Dorsolateral prefrontal cortex (tissue), 120 donors: ENCODE measurements at regions of chr5 and their contacts with region 1.

Region 1: GRCh38 chr5:32027717-32028321 is 146.3 kb downstream of the GOLPH3 start:
- DNase-seq: peak in 2 of 10 donors; percentile 43 to 57
- H3K4me3 ChIP-seq: peak overlapping the region in 46 of 59 donors; percentile 0 to 53 (median 26)
- H3K27ac ChIP-seq: peak overlapping the region; percentile 27 to 96 (median 85)
- H3K27me3 ChIP-seq: no peaks in the 10 kb centered on the region
- CTCF ChIP-seq: no peak

Region 2: DNA sequence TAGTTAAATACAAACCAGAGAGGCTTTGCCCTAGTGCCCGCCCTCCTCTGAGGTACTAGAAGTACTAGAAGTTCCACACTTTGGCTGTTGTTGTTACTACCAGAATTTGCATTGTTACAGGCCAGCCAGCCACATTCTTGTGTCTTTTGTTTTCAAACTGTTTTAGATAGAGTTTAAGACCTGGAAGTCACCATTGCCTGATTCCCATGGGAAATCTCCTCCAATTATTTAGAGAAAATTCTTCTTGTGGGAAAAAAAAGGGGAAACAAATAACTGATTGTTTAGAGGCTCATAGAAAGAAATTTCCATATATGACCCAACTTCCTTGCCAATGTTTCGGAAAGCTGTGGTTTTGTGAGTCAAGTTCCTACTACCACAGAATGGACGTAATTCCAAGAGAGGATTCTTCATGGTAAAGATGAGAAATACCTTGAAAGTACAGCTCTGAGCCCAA is 105.9 kb before region 1 on chr5:
- intact Hi-C with region 1: loop called (anchors 5 to 10 kb)
- DNase-seq: no peak
- H3K4me3 ChIP-seq: no peak overlapping the region
- H3K27ac ChIP-seq: no peak overlapping the region
- H3K27me3 ChIP-seq: no peaks in the 10 kb centered on the region
- CTCF ChIP-seq: no peak